ENCODE measurements at regions of chr19 and their contacts with region 1.

Region 1: DNA sequence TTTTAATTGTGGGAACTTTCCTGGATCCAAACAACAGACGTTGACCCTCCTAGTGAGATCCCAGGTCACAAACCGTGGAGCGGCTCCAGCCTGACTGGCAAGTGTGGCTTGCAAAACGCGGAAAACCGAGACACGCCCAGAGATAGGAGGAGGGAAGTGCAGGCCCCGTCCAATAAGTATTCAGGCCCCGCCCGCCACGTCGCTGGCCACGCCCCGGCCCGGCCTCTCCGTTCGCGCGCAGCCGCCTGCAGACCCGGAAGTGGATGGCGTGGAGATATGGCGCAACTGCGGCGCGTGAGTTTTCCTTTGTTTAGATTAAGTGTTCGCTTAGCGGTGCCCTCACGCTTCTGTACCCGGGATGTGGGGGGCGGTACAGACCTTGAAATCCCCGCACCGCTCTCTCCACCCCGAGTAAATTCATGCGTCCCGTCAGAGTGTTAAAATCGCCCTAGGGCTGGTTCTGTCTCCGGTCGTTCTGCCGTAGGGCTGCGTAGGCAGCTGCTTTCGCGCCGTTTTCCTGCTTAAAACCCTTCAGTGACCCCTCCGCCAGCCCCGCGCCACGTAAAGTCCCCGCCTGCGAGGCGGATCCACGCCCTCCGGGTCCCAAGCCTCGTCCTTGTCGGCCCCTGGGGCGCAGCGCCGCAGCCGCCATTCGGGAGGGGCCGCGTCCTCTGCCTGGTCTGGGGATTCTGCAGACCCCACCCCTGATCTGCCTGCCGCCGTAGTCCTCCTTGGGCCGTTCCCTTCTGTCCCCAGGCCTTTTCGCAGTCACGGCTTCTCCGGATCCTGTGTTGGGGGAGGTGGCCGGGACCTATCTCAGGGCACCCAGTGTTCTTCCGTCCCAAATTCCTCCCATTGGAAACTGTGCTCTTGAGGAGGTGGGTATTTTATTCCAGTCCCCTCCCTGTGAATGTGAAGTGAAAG is at the start of gene ZNF766:
- DNase-seq: peak; percentile 96
- H3K4me3 Mint-ChIP-seq: peak within 1 kb of the TSS; percentile 98
- H3K27ac Mint-ChIP-seq: peak within 1 kb of the TSS; percentile 95
- H3K4me1 Mint-ChIP-seq: peaks cover 24% of the 10 kb centered on the region
- H3K27me3 Mint-ChIP-seq: no peaks in the 10 kb centered on the region
- total RNA-seq, gene ZNF766: 13.8 and 16.5 TPM in 2 replicates

Region 2: GRCh38 chr19:52189735-52190486 is 79.7 kb before region 1 on chr19 and contains the start of gene PPP2R1A:
- intact Hi-C with region 1: loop called (anchors 1 kb)
- DNase-seq: peak; percentile 97
- H3K4me3 Mint-ChIP-seq: peak within 1 kb of the TSS; percentile 98
- H3K27ac Mint-ChIP-seq: peak within 1 kb of the TSS; percentile 99
- H3K4me1 Mint-ChIP-seq: peaks cover 45% of the 10 kb centered on the region
- H3K27me3 Mint-ChIP-seq: no peaks in the 10 kb centered on the region
- total RNA-seq, gene PPP2R1A: 214 and 215 TPM in 2 replicates

Region 3: GRCh38 chr19:52336117-52336790 is 66.7 kb after region 1 on chr19 and contains the start of gene ZNF610:
- intact Hi-C with region 1: loop called (anchors 1 kb)
- DNase-seq: peak; percentile 77
- H3K4me3 Mint-ChIP-seq: peak within 1 kb of the TSS; percentile 88
- H3K27ac Mint-ChIP-seq: peak within 1 kb of the TSS; percentile 91
- H3K4me1 Mint-ChIP-seq: peaks cover 5% of the 10 kb centered on the region
- H3K27me3 Mint-ChIP-seq: no peaks in the 10 kb centered on the region
- total RNA-seq, gene ZNF610: 0.29 and 0.36 TPM in 2 replicates

Region 4: DNA sequence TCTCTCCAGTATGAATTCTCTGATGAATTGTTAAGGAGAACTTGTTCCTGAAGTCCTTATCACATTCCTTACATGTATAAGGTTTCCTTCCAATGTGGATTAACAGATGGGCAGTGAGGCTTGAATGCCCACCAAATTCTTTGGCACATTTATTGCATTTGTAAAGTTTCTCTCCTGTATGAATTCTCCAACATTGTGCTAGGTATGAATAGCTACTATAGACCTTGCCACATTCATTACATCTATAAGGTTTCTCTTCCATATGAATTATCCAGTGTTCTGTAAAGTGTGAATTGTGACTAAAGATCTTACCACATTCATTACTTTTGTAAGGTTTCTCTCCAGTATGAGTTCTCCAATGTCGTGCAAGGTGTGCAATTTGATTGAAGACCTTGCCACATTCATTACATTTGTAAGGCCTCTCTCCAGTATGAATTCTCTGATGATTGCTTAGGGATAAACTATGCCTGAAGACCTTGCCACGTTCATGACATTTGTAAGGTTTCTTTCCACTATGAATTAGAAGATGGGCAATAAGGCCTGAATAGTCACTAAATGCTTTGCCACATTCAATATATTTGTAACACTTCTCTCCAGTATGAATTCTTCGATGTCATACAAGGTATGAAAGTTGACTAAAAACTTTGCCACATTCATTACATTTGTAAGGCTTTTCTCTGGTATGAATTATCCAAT is 204.2 kb after region 1 on chr19:
- intact Hi-C with region 1: no loop called
- DNase-seq: no peak
- H3K4me3 Mint-ChIP-seq: no peak overlapping the region
- H3K27ac Mint-ChIP-seq: no peak overlapping the region
- H3K4me1 Mint-ChIP-seq: no peaks in the 10 kb centered on the region
- H3K27me3 Mint-ChIP-seq: no peaks in the 10 kb centered on the region

Region 5: DNA sequence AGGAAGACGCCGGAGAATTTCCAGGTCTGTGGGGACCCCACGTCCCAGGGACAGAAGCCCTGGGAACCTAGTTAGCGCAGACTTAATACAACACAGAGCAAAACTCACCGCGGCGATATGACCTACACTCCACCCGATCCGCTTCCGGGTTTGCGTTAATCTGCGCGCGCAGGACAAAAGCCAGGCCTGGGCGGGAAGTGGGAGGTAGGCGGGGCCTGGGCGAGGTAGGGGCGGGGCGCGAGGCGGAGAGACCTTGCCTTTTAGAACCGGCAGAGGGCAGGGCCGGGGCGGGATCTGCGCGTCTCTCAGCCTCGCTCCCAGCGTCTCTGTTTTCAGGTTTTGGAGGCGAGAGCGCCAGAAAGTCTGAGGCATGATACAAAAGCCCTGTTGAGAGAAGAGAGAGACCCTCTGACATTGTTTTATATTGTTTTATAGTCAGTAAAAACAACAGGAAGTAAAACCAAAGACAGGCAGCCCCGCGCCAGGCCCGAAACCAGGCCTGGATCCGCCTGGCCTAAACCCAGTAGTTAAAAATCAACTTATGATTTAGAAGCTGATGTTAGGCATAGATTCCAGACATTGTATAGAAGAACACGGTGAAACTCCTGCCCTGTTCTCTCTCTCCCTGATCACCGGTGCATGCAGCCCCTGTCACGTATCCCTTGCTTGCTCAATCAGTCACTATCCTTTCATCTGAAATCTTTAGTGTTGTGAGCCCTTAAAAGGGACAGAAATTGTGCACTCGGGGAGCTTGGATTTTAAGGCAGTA is 465.5 kb after region 1 on chr19 and contains the start of gene ZNF611:
- intact Hi-C with region 1: loop called (anchors 1 kb)
- DNase-seq: peak; percentile 97
- H3K4me3 Mint-ChIP-seq: peak within 1 kb of the TSS; percentile 91
- H3K27ac Mint-ChIP-seq: peak within 1 kb of the TSS; percentile 92
- H3K4me1 Mint-ChIP-seq: peaks cover 27% of the 10 kb centered on the region
- H3K27me3 Mint-ChIP-seq: no peaks in the 10 kb centered on the region
- total RNA-seq, gene ZNF611: 17.0 and 21.0 TPM in 2 replicates

Region 6: GRCh38 chr19:52897144-52897935 is 627.7 kb after region 1 on chr19 and contains the start of gene ZNF320:
- intact Hi-C with region 1: loop called (anchors 1 kb)
- DNase-seq: peak; percentile 90
- H3K4me3 Mint-ChIP-seq: peak within 1 kb of the TSS; percentile 92
- H3K27ac Mint-ChIP-seq: peak within 1 kb of the TSS; percentile 87
- H3K4me1 Mint-ChIP-seq: peaks cover 4% of the 10 kb centered on the region
- H3K27me3 Mint-ChIP-seq: no peaks in the 10 kb centered on the region
- total RNA-seq, gene ZNF320: 10.5 and 11.0 TPM in 2 replicates

Region 7: DNA sequence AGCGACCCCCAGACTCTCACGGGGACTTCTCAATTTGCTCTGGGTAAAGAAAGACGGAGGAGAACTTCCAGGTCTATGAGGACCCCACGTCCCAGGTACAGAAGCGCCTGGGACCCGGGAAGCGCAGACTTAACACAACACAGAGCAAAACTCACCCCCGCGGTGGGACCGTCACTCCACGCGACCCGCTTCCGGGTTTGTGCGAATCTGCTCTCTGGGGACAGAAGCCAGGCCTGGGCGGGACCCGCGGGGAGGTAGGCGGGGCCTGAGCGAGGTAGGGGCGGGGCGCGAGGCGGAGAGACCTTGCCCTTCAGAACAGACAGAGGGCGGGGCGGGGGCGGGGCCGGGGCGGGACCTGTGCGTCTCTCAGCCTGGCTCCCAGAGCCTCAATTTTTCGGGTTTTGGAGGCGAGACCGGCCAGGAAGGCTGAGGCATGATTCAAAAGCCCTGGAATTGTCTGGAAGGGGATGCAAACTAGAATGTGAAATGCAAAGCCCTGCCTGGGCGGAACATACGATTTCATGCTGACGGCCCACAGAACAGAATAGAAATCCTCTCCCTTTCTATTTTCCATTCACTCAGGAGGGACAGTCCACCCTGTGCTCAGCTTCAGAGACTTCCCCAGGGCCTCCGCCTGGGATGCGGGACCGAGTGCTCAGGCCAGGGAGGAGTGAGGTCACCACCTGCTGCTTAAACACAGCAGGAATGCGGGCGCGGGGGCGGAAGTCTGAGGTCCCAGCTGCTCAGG is 673.0 kb after region 1 on chr19:
- intact Hi-C with region 1: loop called (anchors 1 kb)
- DNase-seq: peak; percentile 94
- H3K4me3 Mint-ChIP-seq: peak overlapping the region; percentile 89
- H3K27ac Mint-ChIP-seq: peak overlapping the region; percentile 88
- H3K4me1 Mint-ChIP-seq: peaks cover 27% of the 10 kb centered on the region
- H3K27me3 Mint-ChIP-seq: peaks cover 2% of the 10 kb centered on the region